IMR-90 (cell line): ENCODE measurements at regions of chr21 and their contacts with region 1.

Region 1: DNA sequence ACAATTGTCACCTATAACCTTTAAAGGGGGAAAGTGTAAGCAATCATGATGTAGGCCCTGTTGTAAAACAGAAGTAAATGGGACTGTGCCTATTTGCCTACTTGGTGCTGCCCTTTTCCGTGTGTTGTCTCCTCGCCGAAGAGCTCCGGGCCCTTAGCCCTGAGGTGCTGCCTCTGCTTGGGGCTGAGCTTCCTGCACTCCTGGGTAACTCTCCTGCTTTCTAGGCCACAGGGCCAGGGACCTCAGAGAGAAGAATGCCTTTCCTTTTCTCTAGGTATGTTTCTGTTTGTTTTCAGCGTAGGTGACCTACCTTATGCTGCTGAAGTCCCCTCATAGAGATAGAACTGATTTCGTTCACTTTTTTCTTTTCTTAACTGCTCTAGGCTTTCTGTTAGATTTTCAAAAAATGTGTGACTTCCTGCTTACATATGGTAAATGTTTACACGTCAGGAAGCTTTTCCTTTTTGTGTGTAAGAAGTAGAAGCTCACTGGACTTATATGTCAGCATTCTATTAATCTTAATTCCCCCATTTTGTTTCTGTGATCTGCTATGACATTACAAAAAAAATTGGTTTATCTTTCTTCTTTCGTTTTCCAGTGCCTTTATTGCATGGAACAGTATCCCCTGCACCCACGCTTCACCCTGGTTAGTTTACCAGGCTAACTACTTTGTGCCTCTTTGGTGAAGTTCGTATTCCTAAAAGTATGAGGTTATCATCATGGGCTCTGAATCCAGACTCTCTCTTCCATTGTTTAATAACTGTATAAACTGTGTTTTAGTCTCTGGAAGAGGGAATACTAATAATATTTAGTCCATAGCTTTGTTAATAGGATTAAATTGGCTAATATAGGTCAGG is 61.7 kb downstream of the ITSN1 start:
- DNase-seq: peak; percentile 11
- ATAC-seq: peak; percentile 32; the same call in 1 of the 2 replicates
- H3K4me3 ChIP-seq: no peak overlapping the region
- H3K27ac ChIP-seq: peak overlapping the region; percentile 42; the same call in 1 of the 2 replicates
- H3K4me1 ChIP-seq: peaks cover 9% of the 10 kb centered on the region
- H3K27me3 ChIP-seq: no peaks in the 10 kb centered on the region
- CTCF ChIP-seq: no peak
- POLR2A ChIP-seq: no peak
- RAD21 ChIP-seq: no peak

Region 2: DNA sequence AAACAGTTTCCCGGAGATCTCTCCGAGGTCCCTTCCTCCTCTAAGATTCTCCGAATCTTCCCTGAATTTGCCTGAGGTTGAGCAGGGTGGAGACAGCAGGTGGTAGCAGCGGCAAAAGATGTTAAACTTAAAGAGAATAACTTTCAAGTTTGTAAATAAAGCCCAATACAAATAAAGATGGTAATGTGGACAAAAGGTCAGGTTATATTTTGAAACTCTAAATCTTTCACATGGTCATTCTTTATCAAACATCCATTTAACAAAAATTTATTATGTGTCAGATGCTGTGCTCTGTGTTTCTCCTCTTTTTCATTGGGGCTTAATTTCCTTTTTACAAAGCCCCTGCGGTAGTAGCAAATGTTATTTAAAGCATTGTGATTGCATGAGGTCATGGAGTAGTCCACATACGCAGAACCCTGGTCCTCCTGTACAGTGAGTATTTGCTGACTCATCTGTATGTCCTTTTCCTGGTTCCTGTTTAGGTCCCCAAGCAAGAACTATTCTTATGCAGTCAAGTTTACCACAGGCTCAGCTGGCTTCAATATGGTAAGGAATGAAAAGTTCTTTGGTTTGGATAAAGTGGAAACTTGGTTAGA is 57.6 kb after region 1 on chr21:
- CTCF ChIA-PET with region 1: interaction called, 10 read pairs
- POLR2A ChIA-PET with region 1: no interaction called
- dilution Hi-C with region 1: no loop called
- in situ Hi-C with region 1: no loop called
- intact Hi-C with region 1: no loop called
- DNase-seq: peak; percentile 99
- ATAC-seq: peak; percentile 86
- H3K4me3 ChIP-seq: peak overlapping the region; percentile 3; the same call in 1 of the 2 replicates
- H3K27ac ChIP-seq: peak overlapping the region; percentile 78
- H3K4me1 ChIP-seq: peaks cover 9% of the 10 kb centered on the region
- H3K27me3 ChIP-seq: no peaks in the 10 kb centered on the region
- CTCF ChIP-seq: no peak
- POLR2A ChIP-seq: no peak
- RAD21 ChIP-seq: no peak